CD8-positive, alpha-beta memory T cell (primary cell): ENCODE measurements at regions of chr9 and their contacts with region 1.

Region 1: DNA sequence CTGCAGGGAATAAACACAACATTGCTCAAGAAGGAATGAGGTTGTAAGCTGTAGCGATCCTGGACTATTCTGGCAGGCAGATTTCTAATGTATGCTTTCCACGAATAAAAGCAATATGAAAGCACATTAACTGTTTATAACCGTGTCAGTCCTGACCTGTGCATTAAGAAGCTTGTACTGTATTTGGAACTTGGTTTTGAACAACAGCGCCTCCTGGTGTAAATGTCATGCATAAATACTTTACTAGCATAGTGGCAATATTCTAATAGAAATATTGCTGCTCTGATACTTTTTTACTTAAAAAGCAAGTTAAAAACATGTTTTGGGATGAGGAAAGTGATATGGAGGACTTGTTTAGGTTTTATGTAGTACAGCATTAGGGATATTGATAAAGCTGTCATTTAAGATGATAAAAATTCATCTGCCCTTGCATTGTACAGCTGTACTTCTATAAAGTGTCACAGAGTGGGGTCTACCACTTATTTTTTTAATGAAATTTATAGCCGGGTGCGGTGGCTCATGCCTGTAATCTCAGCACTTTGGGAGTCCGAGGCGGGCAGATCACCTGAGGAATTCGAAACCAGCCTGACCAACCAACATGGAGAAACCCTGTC is 70.7 kb upstream of the GNE start:
- DNase-seq: peak in 4 of 5 donors; percentile 10 to 55 (median 30)
- H3K4me3 ChIP-seq: no peak overlapping the region
- H3K4me3 Mint-ChIP-seq: no peak overlapping the region
- H3K27ac ChIP-seq: no peak overlapping the region
- H3K27ac Mint-ChIP-seq: peak overlapping the region in 1 of 8 donors; percentile 50
- H3K4me1 ChIP-seq: no peaks in the 10 kb centered on the region
- H3K4me1 Mint-ChIP-seq: peaks cover 3 to 6% (median 4%) of the 10 kb centered on the region in 3 donors
- H3K27me3 ChIP-seq: no peaks in the 10 kb centered on the region
- H3K27me3 Mint-ChIP-seq: peaks cover 0 to 2% of the 10 kb centered on the region in 2 donors

Region 2: GRCh38 chr9:36249189-36249588 is 79.7 kb before region 1 on chr9:
- CTCF ChIA-PET with region 1: interaction called, 22 read pairs
- POLR2A ChIA-PET with region 1: no interaction called
- DNase-seq: no peak
- H3K4me3 ChIP-seq: no peak overlapping the region
- H3K4me3 Mint-ChIP-seq: no peak overlapping the region
- H3K27ac ChIP-seq: no peak overlapping the region
- H3K27ac Mint-ChIP-seq: no peak overlapping the region
- H3K4me1 ChIP-seq: no peaks in the 10 kb centered on the region
- H3K4me1 Mint-ChIP-seq: peaks cover 13 to 24% (median 20%) of the 10 kb centered on the region in 3 donors
- H3K27me3 ChIP-seq: no peaks in the 10 kb centered on the region
- H3K27me3 Mint-ChIP-seq: no peaks in the 10 kb centered on the region